ENCODE measurements at regions of chr11 and their contacts with region 1.

Region 1: DNA sequence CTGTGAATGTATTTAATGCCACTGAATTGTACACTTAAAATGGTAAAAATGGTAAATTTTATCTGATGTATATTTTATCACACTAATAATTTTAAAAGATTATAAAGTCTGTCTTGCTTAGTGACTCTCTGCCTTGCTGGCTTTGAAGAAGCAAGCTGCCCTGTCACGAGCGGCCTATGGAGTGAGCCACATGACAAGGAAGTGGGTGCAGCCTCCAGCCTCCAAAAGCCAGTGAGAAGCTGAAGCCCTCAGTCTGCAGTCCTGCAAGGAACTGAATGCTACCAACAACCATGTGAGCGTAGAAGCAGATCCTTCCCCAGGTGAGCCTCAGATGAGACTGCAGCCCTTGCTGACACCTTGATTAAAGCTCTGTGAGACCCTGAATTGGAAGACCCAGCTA is 20.0 kb downstream of the C11orf24 start:
- DNase-seq: no peak
- ATAC-seq: no peak
- H3K4me3 ChIP-seq: no peak overlapping the region
- H3K27ac ChIP-seq: no peak overlapping the region
- H3K4me1 ChIP-seq: no peaks in the 10 kb centered on the region
- H3K27me3 ChIP-seq: no peaks in the 10 kb centered on the region
- CTCF ChIP-seq: no peak

Region 2: DNA sequence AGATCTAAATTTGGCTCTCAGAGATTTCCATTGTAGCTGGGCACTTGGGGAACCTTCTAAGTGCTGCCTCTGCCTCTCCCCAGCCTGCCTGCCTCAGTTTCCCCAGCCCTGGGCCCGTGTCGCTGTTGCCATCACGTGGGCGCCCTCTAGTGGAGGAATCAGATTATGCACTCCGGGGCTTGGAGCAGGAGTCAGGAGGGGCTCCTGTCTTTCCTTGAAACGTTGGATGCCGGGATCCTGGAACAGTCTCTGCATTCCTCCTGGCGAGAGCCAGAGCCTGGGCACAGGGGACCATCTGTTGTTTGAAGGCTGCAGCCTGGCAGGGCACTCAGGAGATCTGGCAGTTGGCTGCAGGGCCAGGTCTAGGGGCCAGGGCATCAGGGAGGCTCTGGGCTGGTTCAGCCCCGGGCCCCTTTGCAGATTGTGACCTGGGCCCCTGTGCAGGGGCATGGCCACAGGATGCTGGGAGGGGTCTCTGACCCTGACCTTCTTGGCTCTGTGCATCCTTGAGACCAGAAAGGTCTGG is 132.3 kb after region 1 on chr11:
- intact Hi-C with region 1: loop called in 2 of 3 experiments (anchors 5 to 10 kb)
- DNase-seq: peak in 5 of 6 donors; percentile 42 to 85 (median 69)
- ATAC-seq: peak in 3 of 4 donors; percentile 33 to 55 (median 52)
- H3K4me3 ChIP-seq: no peak overlapping the region
- H3K27ac ChIP-seq: no peak overlapping the region
- H3K4me1 ChIP-seq: peaks cover 0 to 15% (median 4%) of the 10 kb centered on the region in 3 donors
- H3K27me3 ChIP-seq: no peaks in the 10 kb centered on the region
- CTCF ChIP-seq: peak; percentile 76 to 92 (median 86)

Measured in pancreas (tissue), 10 donors.